Posterior cingulate gyrus (tissue), 11 donors: ENCODE measurements at regions of chr1 and their contacts with region 1.

Region 1: GRCh38 chr1:152654110-152654509 is 9.1 kb upstream of the LCE2D start:
- DNase-seq: peak in 9 of 10 donors; percentile 17 to 88 (median 55)

Region 2: GRCh38 chr1:152972196-152972886 is 318.2 kb after region 1 on chr1:
- intact Hi-C with region 1: loop called (anchors 5 kb)
- DNase-seq: peak in 1 of 10 donors; percentile 14